ENCODE measurements at regions of chr14 and their contacts with region 1.

Region 1: DNA sequence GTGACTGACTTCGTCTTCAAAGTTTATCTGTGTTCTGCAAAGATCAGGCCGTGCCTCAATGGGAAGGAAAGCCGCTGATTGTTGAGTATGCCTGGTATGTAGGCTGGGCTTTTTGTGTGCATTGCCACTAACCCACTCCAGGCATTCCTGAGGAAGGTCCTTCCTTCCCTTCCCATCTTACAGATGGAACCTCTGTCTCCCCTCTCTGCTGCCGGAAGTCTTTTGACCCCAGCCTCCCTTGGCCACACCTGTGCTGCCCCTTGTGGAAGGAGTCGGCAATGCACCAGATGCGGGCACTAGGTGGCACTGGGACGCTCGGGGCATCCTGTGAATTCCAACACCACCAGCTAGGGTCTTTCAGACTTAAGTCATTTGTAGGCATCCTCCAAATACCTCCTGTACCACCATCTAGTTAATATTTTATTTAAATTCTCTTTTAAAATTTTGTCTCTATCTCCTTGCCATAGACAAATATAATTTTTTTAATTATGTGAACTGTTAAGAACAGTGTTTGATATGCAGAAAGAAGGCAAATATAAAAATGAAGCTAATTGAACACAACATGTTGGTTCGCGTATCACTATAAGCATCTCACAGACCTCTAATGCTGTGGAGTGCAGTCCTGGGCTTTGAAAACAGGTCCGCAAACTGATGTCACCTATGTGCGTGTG is 99.5 kb downstream of the RIN3 start:
- H3K4me3 Mint-ChIP-seq: no peak overlapping the region
- H3K27ac Mint-ChIP-seq: no peak overlapping the region
- H3K4me1 Mint-ChIP-seq: peaks cover 49% of the 10 kb centered on the region
- H3K27me3 Mint-ChIP-seq: no peaks in the 10 kb centered on the region

Region 2: GRCh38 chr14:92040431-92041051 is 572.6 kb before region 1 on chr14:
- intact Hi-C with region 1: no loop called
- H3K4me3 Mint-ChIP-seq: peak overlapping the region; percentile 91
- H3K27ac Mint-ChIP-seq: peak overlapping the region; percentile 97
- H3K4me1 Mint-ChIP-seq: peaks cover 27% of the 10 kb centered on the region
- H3K27me3 Mint-ChIP-seq: no peaks in the 10 kb centered on the region

Region 3: DNA sequence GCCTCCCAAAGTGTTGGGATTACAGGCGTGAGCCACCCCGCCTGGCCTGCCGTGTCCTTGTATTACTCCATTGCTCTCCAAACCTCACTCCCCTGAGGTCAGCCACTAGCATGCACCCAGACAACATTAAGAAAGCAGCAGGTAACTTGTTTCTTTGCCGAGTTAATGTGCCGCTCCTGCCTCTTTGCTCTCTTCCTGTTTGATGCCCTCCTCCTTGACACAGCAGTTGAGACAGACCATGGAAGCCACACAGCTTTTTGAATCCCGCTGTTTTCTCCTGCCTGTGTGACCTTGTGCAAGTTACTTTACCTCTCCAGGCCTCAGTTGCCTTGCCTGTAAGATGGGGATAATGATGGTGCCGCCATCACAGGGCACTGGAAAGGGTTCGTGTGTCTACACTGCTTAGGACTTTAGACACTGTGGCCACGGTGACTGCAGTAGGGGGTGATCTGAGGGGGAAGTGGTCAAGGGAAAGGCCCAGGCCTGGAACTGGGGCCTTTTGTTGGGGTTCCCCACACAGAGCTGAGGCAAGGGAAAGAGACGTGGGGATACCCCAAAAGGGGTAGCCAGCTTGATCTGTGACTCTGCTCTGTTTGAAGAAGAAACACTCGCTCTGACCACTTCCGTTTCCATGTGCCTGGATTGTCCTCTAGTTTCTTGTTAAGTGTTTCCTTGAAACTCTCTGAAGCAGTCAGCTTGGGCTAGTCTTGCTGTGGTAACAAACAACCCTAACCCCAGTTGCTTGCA is 30.2 kb before region 1 on chr14:
- intact Hi-C with region 1: loop called (anchors 5 kb)
- H3K4me3 Mint-ChIP-seq: no peak overlapping the region
- H3K27ac Mint-ChIP-seq: peak overlapping the region; percentile 9
- H3K4me1 Mint-ChIP-seq: peaks cover 52% of the 10 kb centered on the region
- H3K27me3 Mint-ChIP-seq: no peaks in the 10 kb centered on the region

Region 4: DNA sequence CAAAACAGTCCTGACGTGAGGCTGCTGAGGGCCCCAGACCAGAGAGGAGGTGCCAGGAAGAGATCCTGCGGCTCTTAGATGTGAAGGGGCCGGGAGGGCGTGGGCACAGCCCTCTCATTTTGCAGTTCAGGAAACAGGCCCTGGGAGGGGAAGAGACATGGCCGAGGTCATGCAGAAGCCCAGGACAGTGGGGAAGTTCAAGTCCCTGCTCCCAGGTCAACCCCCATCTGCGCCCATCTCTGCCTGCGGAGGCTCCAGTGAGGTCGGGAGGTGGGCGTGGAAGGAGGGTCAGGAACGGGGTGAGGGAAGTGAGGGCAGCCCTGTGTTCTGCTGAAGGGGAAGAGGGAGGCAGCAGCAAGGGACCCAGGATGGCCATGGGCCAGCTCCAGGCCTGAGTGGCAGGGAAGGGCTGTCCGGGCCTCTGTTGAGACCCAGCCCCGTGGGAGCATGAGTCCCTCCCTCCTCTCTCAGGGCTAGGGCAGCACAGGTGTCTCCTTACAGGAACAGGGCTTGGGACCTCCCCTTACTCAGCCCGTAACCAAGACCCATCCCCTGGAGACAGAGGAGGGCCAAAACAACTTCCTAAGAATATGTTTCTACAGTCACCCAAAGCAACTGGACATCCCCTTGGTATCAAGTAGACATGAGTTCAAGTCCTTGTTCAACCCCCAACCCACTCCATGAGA is 44.5 kb after region 1 on chr14:
- intact Hi-C with region 1: loop called (anchors 1 kb)
- H3K4me3 Mint-ChIP-seq: peak overlapping the region; percentile 99
- H3K27ac Mint-ChIP-seq: peak overlapping the region; percentile 91
- H3K4me1 Mint-ChIP-seq: peaks cover 88% of the 10 kb centered on the region
- H3K27me3 Mint-ChIP-seq: no peaks in the 10 kb centered on the region

Region 5: GRCh38 chr14:92680781-92681650 is 67.9 kb after region 1 on chr14:
- intact Hi-C with region 1: loop called (anchors 2 kb)
- H3K4me3 Mint-ChIP-seq: no peak overlapping the region
- H3K27ac Mint-ChIP-seq: no peak overlapping the region
- H3K4me1 Mint-ChIP-seq: peaks cover 71% of the 10 kb centered on the region
- H3K27me3 Mint-ChIP-seq: no peaks in the 10 kb centered on the region

Region 6: GRCh38 chr14:92768795-92769194 is 155.7 kb after region 1 on chr14:
- intact Hi-C with region 1: no loop called
- H3K4me3 Mint-ChIP-seq: no peak overlapping the region
- H3K27ac Mint-ChIP-seq: peak overlapping the region; percentile 83
- H3K4me1 Mint-ChIP-seq: peaks cover 43% of the 10 kb centered on the region
- H3K27me3 Mint-ChIP-seq: peaks cover 4% of the 10 kb centered on the region

Region 7: GRCh38 chr14:92960711-92961549 is 347.8 kb after region 1 on chr14:
- intact Hi-C with region 1: no loop called
- H3K4me3 Mint-ChIP-seq: no peak overlapping the region
- H3K27ac Mint-ChIP-seq: peak overlapping the region; percentile 55
- H3K4me1 Mint-ChIP-seq: peaks cover 26% of the 10 kb centered on the region
- H3K27me3 Mint-ChIP-seq: no peaks in the 10 kb centered on the region